Activated naive CD4-positive, alpha-beta T cell treated with anti-CD3 and anti-CD28 coated beads for 36 hours (primary cell): ENCODE measurements at regions of chr2 and their contacts with region 1.

Region 1: GRCh38 chr2:36858551-36859365 is 107.6 kb downstream of the STRN start:
- DNase-seq: no peak
- H3K4me3 Mint-ChIP-seq: no peak overlapping the region
- H3K27ac Mint-ChIP-seq: peak overlapping the region; percentile 52
- H3K4me1 Mint-ChIP-seq: peaks cover 17% of the 10 kb centered on the region
- H3K27me3 Mint-ChIP-seq: no peaks in the 10 kb centered on the region

Region 2: DNA sequence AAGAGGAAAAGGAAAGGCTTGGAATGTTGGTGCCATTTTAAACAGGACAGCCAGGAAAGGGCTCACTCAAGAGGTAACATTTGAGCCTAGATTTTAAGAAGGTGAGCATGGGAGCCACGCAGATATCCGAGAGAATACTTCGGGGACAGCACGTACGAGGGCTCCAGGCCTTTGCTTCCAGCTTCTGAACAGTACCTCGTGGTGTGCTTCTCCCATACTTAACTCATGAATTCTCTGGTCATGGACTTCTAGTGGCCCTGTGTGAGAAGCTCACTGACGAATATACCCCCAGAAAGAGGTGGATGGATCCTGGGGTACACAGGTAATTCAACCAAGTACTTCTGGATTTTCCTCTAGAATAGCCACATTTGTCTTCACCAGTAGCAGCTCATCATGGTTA is 164.9 kb before region 1 on chr2:
- CTCF ChIA-PET with region 1: no interaction called
- intact Hi-C with region 1: no loop called
- DNase-seq: no peak
- H3K4me3 Mint-ChIP-seq: no peak overlapping the region
- H3K27ac Mint-ChIP-seq: no peak overlapping the region
- H3K4me1 Mint-ChIP-seq: peaks cover 4% of the 10 kb centered on the region
- H3K27me3 Mint-ChIP-seq: peaks cover 7% of the 10 kb centered on the region

Region 3: DNA sequence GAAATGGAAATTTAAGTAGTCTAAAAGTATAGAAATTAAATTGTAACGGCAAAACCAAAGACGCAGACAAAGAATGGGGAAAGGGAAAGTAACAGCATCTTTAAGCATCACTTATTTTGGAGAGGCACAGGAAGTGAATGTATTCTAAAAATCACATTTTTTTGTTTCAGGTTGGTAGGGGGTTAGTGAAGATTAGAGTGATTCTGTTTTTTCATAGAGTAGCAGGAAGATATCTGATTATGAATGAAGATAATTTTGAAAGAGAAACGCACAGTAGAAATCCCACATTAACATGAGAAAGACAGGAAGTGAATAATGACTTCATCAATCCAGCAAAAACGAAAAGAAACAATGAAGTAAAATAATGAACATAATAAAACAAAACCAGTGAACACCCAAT is 23.6 kb before region 1 on chr2:
- CTCF ChIA-PET with region 1: no interaction called
- intact Hi-C with region 1: loop called (anchors 2 kb)
- DNase-seq: no peak
- H3K4me3 Mint-ChIP-seq: peak overlapping the region; percentile 1
- H3K27ac Mint-ChIP-seq: peak overlapping the region; percentile 78
- H3K4me1 Mint-ChIP-seq: peaks cover 15% of the 10 kb centered on the region
- H3K27me3 Mint-ChIP-seq: no peaks in the 10 kb centered on the region

Region 4: GRCh38 chr2:36889795-36890194 is 31.0 kb after region 1 on chr2:
- CTCF ChIA-PET with region 1: no interaction called
- intact Hi-C with region 1: loop called (anchors 1 kb)
- DNase-seq: peak; percentile 16
- H3K4me3 Mint-ChIP-seq: no peak overlapping the region
- H3K27ac Mint-ChIP-seq: peak overlapping the region; percentile 40
- H3K4me1 Mint-ChIP-seq: peaks cover 10% of the 10 kb centered on the region
- H3K27me3 Mint-ChIP-seq: no peaks in the 10 kb centered on the region